ENCODE measurements at regions of chr13 and their contacts with region 1.

Region 1: GRCh38 chr13:44577236-44578066 is 1.3 kb upstream of the TSC22D1 start:
- DNase-seq: peak; percentile 92 to 98 (median 96)
- ATAC-seq: peak; percentile 76
- H3K4me3 ChIP-seq: peak overlapping the region; percentile 78 to 87
- H3K4me3 Mint-ChIP-seq: peak overlapping the region; percentile 95
- H3K27ac ChIP-seq: peak overlapping the region; percentile 78 to 92
- H3K27ac Mint-ChIP-seq: peak overlapping the region; percentile 95
- H3K4me1 ChIP-seq: peaks cover 35% of the 10 kb centered on the region
- H3K4me1 Mint-ChIP-seq: peaks cover 36% of the 10 kb centered on the region
- H3K27me3 ChIP-seq: no peaks in the 10 kb centered on the region
- H3K27me3 Mint-ChIP-seq: no peaks in the 10 kb centered on the region
- CTCF ChIP-seq: no peak

Region 2: DNA sequence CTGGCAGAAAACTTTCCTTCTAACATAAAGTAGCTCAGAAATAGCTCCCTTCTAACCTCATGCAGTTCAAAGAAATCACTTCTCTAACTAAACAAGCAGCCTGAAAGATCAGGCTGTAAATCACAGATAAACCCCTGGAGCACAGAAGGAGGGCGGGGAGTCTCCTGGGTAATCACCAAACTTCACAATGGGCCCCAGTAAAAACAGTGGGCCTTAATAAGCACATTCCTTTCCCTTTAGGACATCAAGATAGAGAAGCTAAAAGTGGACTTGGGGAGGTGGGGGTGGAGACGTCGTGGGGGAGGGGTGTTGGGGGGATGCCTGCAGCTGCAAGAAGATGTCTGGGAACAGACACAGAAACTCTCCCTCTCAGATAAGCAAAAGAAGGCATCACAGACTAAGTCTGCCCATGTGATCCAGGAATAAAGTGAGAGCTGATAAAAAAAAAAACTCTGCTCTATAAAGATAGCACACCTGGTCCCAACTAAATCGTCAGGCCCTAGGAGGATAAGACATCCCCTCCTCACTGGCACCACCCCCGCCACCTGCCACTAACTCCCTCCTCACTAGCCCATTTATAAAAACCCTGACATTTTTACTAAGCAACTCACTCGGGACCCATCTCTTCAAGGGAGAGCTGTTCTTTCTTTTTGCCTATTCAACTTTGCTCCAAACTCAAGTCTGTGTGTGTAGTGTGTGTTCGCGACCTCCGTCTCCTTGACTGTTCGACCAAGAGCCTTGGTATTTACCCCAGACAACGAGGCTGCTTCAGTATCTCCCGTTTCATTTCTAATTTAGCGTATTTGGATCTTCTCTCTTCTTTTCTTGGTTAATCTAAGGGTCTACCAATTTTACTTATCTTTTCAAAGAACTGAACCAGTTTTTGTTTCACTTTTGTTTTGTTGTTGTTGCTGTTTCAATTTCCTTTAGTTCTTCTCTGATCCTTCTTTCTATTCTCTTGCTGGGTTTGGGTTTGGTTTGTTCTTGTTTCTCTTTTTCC is 1522.3 kb before region 1 on chr13:
- CTCF ChIA-PET with region 1: no interaction called
- POLR2A ChIA-PET with region 1: no interaction called
- intact Hi-C with region 1: loop called (anchors 10 kb)
- DNase-seq: peak in 5 of 9 experiments; percentile 17 to 60 (median 40)
- ATAC-seq: peak; percentile 35
- H3K4me3 ChIP-seq: peak overlapping the region; percentile 55 to 71
- H3K4me3 Mint-ChIP-seq: no peak overlapping the region
- H3K27ac ChIP-seq: peak overlapping the region; percentile 75 to 88
- H3K27ac Mint-ChIP-seq: no peak overlapping the region
- H3K4me1 ChIP-seq: peaks cover 38% of the 10 kb centered on the region
- H3K4me1 Mint-ChIP-seq: peaks cover 34% of the 10 kb centered on the region
- H3K27me3 ChIP-seq: no peaks in the 10 kb centered on the region
- H3K27me3 Mint-ChIP-seq: no peaks in the 10 kb centered on the region
- CTCF ChIP-seq: no peak

Region 3: DNA sequence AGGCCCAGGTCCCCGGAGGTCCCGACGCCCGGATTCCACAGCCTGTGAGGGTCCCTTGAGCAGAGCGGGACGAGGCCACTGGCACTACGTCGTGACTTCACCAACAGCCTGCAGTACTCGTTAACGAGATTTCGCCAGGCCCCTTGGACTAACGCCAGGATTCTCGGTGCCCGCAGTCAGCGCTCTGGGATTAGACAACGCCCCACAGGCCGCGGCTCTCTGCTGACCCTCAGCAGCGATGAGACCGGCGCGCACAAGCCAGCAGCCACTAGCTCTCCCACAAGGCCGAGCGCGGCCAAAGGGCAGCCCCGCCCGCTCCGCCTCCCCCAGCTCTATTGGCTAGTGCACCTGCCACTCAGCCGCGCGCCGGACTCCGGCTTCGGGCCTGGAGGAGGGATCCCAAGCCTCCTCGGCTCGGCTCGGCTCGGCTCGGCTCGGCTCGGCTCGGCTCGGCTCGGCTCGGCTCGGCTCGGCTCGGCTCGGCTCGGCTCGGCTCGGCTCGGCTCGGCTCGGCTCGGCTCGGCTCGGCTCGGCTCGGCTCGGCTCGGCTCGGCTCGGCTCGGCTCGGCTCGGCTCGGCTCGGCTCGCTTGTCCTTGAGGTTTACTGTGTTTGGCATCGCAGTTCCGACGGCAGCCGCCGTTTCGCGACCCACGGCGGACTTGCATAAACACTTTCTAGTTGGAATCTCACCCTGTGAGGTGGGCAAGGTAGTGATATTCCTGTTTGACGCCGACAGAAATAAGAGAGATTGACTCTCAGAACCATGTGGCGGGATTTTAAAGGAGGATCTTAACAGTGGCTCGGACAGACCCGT is 435.5 kb before region 1 on chr13:
- CTCF ChIA-PET with region 1: no interaction called
- POLR2A ChIA-PET with region 1: no interaction called
- intact Hi-C with region 1: loop called (anchors 2 to 5 kb)
- DNase-seq: peak; percentile 84 to 98 (median 91)
- ATAC-seq: peak; percentile 96
- H3K4me3 ChIP-seq: peak overlapping the region; percentile 78 to 81
- H3K4me3 Mint-ChIP-seq: peak overlapping the region; percentile 91
- H3K27ac ChIP-seq: peak overlapping the region; percentile 68 to 89
- H3K27ac Mint-ChIP-seq: peak overlapping the region; percentile 94
- H3K4me1 ChIP-seq: peaks cover 13% of the 10 kb centered on the region
- H3K4me1 Mint-ChIP-seq: peaks cover 15% of the 10 kb centered on the region
- H3K27me3 ChIP-seq: no peaks in the 10 kb centered on the region
- H3K27me3 Mint-ChIP-seq: peaks cover 2% of the 10 kb centered on the region
- CTCF ChIP-seq: no peak

Region 4: GRCh38 chr13:44484562-44485138 is 92.8 kb before region 1 on chr13:
- CTCF ChIA-PET with region 1: interaction called, 24 read pairs
- POLR2A ChIA-PET with region 1: no interaction called
- intact Hi-C with region 1: loop called (anchors 2 to 5 kb)
- DNase-seq: peak in 2 of 9 experiments; percentile 2 to 31
- ATAC-seq: no peak
- H3K4me3 ChIP-seq: peak overlapping the region in 1 of 2 experiments; percentile 23
- H3K4me3 Mint-ChIP-seq: peak overlapping the region; percentile 59
- H3K27ac ChIP-seq: peak overlapping the region in 1 of 2 experiments; percentile 5
- H3K27ac Mint-ChIP-seq: peak overlapping the region; percentile 42
- H3K4me1 ChIP-seq: peaks cover 10% of the 10 kb centered on the region
- H3K4me1 Mint-ChIP-seq: peaks cover 13% of the 10 kb centered on the region
- H3K27me3 ChIP-seq: no peaks in the 10 kb centered on the region
- H3K27me3 Mint-ChIP-seq: no peaks in the 10 kb centered on the region
- CTCF ChIP-seq: no peak

Region 5: DNA sequence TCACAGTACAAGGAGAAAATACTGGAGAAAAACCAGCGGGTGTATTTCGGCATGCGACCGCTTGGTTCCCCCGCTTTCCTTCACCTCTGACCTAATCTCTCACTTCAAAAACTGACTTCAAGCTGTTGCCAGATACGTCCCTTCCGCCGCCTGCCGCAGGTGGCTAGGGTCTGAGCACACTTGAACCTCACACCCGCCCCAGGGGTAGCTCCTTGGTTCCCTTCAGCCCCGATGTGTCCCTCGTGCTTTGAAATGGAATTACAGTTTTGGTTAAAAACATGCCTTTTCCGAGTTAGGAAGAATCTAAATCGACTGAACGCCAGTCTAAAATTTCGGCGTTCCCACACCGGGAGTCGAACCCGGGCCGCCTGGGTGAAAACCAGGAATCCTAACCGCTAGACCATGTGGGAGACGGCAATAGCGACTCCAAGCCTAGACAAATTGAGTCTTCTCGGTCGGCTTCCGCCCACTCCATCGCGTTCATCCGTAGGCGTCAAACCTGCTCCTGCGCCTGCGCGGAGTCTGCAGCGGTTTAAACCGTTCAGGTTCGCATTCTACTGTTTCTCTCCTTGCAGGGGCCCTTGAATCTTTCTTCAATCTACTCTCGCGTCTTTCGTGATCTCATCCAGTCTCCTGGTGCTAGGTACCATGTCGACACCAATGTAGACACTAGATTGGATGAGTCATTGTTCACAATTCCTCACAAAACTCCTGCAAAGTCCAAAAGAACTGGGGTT is 340.3 kb after region 1 on chr13:
- CTCF ChIA-PET with region 1: no interaction called
- POLR2A ChIA-PET with region 1: interaction called, 3 read pairs
- intact Hi-C with region 1: loop called (anchors 1 to 2 kb)
- DNase-seq: peak; percentile 95 to 99 (median 98)
- ATAC-seq: peak; percentile 78
- H3K4me3 ChIP-seq: peak overlapping the region; percentile 54 to 66
- H3K4me3 Mint-ChIP-seq: no peak overlapping the region
- H3K27ac ChIP-seq: peak overlapping the region; percentile 66 to 90
- H3K27ac Mint-ChIP-seq: no peak overlapping the region
- H3K4me1 ChIP-seq: peaks cover 7% of the 10 kb centered on the region
- H3K4me1 Mint-ChIP-seq: peaks cover 14% of the 10 kb centered on the region
- H3K27me3 ChIP-seq: no peaks in the 10 kb centered on the region
- H3K27me3 Mint-ChIP-seq: no peaks in the 10 kb centered on the region
- CTCF ChIP-seq: peak; percentile 39

Region 6: DNA sequence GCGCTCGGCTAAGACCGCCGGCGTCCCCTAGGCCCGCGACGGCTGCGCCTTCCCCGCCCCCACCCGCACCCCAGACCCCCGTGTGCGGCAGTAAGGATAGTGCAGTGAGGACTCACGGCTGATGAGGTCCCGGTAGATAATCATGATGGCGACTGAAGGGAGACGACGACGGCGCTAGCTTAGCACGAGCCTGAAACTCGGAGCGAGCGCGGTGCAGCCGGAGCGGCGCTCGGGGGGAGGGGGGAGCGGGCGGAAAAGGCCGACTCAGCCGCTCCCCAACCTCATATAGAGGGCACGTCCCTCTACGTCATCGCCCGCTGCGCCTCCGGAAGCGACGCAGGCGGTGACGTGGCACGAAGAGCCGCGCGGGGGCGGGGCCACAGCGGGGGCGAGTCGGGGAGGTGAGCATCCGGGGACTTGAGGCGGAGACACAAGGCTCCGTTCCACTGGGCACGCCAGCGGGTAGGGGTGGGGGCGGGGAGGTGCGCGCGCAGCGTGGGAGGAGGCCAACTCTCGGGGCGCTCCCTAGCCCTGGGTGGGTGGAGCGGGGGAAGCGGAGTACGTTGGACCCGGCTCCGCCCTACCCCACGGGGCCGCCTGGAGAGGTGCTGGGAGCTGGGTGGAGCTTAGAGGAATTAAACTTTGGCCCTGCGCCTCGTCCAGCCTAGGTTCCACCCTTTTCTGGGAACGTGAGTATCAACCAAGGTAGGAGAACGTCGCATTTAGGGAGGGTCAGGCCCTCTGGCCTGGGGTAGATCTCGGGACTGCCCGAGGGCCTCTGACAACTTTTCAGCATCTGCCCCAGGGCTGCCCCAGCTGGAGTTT is 763.7 kb after region 1 on chr13 and contains the start of gene TPT1:
- CTCF ChIA-PET with region 1: no interaction called
- POLR2A ChIA-PET with region 1: no interaction called
- intact Hi-C with region 1: loop called in 1 of 2 experiments (anchors 2 kb)
- DNase-seq: peak; percentile 99 to 100 (median 100)
- ATAC-seq: peak; percentile 86
- H3K4me3 ChIP-seq: peak within 1 kb of the TSS; percentile 83 to 89
- H3K4me3 Mint-ChIP-seq: peak within 1 kb of the TSS; percentile 99
- H3K27ac ChIP-seq: peak within 1 kb of the TSS; percentile 96 to 99
- H3K27ac Mint-ChIP-seq: peak within 1 kb of the TSS; percentile 99
- H3K4me1 ChIP-seq: peaks cover 42% of the 10 kb centered on the region
- H3K4me1 Mint-ChIP-seq: peaks cover 63% of the 10 kb centered on the region
- H3K27me3 ChIP-seq: no peaks in the 10 kb centered on the region
- H3K27me3 Mint-ChIP-seq: no peaks in the 10 kb centered on the region
- CTCF ChIP-seq: no peak
- total RNA-seq, gene TPT1: 8,260 to 8,503 TPM

Region 7: DNA sequence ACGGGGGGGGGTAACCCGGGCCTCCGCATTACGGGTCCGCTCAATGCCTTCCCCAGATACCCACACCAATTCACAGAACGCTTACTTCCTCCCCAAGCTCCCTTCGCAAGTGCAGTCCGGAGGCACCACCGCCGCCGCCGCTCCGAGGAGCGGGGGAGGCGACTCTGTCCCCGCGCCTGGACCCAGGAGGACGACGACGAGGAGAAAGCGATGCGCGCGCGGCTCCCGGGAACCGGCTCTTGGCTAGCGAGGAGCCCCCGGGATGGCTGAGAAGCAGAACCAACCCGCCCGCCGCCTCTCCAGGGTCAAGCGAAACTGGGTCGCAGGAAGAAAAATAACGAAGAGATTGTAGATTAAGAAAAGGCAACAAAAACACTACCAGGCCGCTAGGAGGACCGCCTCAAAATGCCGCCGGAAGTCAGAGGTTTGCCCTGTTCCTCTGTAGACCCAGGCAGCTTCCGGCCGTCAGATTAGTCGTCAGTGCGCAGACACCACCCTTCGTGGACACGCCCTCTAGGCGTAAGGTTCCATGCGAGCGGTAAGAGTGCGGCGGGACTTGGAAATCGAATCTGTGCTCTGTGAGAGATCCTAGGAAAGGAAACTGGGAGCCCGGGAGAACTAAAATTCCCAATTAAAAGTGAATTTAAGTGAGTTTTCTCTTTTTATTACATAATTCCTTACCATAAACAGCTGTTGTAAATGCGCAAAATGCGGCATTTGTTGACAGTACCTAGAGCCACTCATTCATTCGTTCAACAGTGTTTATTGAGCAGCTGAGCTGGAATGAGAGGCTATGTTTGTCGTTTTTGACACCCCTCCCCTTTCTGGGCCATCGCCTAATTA is 1475.1 kb after region 1 on chr13 and contains the start of gene ZC3H13:
- CTCF ChIA-PET with region 1: no interaction called
- POLR2A ChIA-PET with region 1: no interaction called
- intact Hi-C with region 1: loop called in 1 of 2 experiments (anchors 5 kb)
- DNase-seq: peak; percentile 84 to 97 (median 91)
- ATAC-seq: peak; percentile 97
- H3K4me3 ChIP-seq: peak within 1 kb of the TSS; percentile 77 to 89
- H3K4me3 Mint-ChIP-seq: peak within 1 kb of the TSS; percentile 88
- H3K27ac ChIP-seq: peak within 1 kb of the TSS; percentile 89 to 98
- H3K27ac Mint-ChIP-seq: peak within 1 kb of the TSS; percentile 94
- H3K4me1 ChIP-seq: peaks cover 23% of the 10 kb centered on the region
- H3K4me1 Mint-ChIP-seq: peaks cover 46% of the 10 kb centered on the region
- H3K27me3 ChIP-seq: no peaks in the 10 kb centered on the region
- H3K27me3 Mint-ChIP-seq: peaks cover 6% of the 10 kb centered on the region
- CTCF ChIP-seq: peak; percentile 37
- total RNA-seq, gene ZC3H13: 50.7 to 54.2 TPM